PC-9 (cell line): ENCODE measurements at regions of chr2 and their contacts with region 1.

Region 1: DNA sequence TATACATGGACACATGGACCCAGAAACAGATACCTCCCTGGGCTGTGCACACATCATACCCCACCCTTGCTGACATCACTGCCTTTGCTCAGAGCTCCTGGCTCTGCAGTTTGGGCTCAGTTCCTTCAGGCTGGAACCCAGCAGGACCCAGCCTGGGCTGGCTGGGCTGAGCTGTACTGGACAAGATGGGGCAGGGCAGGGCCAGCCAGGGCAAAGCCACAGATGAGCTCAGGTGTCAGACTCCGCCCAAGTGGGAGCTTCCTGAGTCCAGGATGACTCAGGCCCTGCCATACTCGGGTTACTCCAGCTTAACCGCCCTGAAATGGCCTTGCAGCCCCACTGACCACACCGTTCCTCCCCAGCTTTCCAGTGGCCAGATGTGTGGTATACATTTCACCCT is 284.9 kb downstream of the OSR1 start:
- DNase-seq: peak; percentile 84 to 87
- H3K4me3 ChIP-seq: no peak overlapping the region
- H3K27ac ChIP-seq: no peak overlapping the region; the same call in 1 of the 2 replicates
- H3K4me1 ChIP-seq: peaks cover 36% of the 10 kb centered on the region
- H3K27me3 ChIP-seq: no peaks in the 10 kb centered on the region
- CTCF ChIP-seq: no peak

Region 2: GRCh38 chr2:19046986-19047780 is 26.3 kb before region 1 on chr2:
- CTCF ChIA-PET with region 1: no interaction called
- POLR2A ChIA-PET with region 1: no interaction called
- intact Hi-C with region 1: no loop called
- DNase-seq: no peak
- H3K4me3 ChIP-seq: no peak overlapping the region
- H3K27ac ChIP-seq: no peak overlapping the region
- H3K4me1 ChIP-seq: peaks cover 9% of the 10 kb centered on the region; the same call in 1 of the 2 replicates
- H3K27me3 ChIP-seq: no peaks in the 10 kb centered on the region
- CTCF ChIP-seq: no peak

Region 3: DNA sequence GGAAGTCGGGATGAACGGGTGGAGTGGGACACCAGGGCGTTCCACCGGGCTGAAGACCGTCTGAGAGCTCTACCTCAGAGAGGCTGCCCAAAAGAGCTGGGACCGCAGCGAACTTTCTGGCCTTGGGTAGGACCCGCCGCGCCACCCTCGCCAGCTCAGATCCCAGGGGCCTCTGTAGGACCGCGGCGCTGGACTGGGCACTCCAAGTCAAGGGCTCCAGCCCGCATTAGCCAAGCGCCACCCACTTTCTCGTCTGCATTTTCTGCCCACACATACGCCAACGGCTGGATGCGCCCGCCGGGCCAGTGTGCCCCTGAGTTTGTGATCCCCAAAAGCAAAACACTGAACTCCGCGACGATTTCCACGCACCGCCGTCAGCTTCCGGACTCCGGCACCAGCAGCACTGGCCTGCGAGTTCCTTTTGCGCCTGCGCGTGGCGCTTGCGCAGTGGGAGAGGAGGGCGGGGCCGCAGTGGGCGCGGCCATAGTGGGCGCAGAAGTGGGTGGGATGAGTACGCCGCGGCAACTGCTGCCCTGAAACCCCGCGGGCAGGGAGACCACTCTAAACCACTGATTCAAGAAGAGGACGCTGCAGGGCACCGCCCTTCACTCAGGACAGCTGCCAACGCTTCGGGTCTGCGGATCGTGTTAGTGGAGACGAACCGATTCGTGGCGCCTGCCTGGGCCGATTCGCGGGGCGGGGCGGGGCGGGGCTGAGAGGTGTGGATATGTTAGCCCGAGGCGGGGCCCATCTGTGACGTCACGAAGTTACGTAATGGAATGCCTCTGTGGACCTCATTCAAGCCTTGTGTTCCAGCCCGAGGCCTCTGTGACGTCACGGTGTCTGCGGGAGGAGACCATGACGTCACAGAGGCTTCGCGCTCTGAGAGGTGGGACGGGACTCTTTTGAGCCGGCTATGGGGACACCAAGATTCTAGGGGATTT is 274.4 kb after region 1 on chr2:
- CTCF ChIA-PET with region 1: no interaction called
- POLR2A ChIA-PET with region 1: no interaction called
- intact Hi-C with region 1: loop called (anchors 10 kb)
- DNase-seq: peak; percentile 86 to 97
- H3K4me3 ChIP-seq: peak overlapping the region; percentile 70
- H3K27ac ChIP-seq: peak overlapping the region; percentile 78
- H3K4me1 ChIP-seq: peaks cover 12% of the 10 kb centered on the region
- H3K27me3 ChIP-seq: no peaks in the 10 kb centered on the region
- CTCF ChIP-seq: no peak